ENCODE measurements at regions of chr18 and their contacts with region 1.

Region 1: DNA sequence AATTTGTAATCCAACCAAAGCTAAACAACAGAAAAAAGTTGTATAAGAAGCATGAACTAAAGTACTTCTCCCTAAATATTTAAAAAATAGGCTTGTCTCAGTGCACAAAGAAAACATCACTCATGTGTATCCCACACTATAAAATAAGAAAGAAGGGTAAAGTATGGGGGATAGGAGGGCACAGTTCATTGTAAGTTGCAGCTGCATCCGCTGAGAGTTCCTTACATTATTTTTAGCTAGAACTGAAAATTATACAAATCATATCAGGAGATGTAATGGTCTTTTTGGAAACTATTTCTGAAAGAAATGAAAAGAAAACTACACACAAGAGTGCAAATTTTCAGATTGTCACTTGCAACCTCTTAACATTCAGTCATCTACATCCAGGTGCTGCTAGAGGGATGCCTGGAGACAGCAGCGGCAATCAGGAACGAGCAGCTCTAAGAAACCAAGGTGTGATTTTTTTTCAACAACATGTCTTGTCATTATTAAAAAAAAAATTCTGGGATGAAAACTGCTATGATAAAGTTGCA is 273.6 kb downstream of the ASXL3 start:
- DNase-seq: no peak
- H3K4me3 Mint-ChIP-seq: no peak overlapping the region
- H3K27ac Mint-ChIP-seq: no peak overlapping the region
- H3K4me1 Mint-ChIP-seq: no peaks in the 10 kb centered on the region
- H3K27me3 Mint-ChIP-seq: no peaks in the 10 kb centered on the region
- CTCF ChIP-seq: no peak

Region 2: DNA sequence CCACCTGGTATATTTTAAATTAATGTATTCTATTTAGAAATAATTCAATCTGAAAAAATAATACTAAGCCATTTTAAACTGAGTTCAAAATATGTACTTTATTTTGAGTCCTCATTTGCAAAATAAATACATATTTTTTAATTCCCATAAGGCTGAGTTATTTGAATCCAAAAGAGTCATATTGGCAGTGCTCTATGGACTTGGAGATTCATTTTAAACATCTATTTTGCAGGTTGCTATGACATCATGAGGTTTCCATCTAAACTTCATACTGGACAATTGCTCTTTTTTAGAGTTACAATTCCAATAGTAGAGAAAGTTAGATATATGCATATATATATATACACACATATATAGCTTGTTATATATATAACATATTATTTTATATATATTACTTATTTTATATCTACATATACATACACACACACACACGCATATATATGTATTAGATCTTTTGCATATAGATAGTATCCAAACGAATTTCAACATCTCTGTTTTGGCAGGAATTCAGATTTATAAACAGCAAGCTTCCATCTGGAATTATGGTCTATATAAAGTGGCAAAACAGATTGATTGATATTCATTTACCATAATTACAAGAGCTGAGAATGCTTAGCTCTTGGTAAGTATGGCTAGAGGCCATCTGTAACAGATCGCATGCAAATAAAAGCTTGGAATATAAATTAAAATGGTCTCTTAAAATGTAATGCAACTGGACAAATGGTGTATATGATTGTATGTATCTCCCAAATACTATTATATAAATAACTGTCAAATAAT is 338.2 kb after region 1 on chr18:
- CTCF ChIA-PET with region 1: no interaction called
- intact Hi-C with region 1: no loop called
- DNase-seq: no peak
- H3K4me3 Mint-ChIP-seq: no peak overlapping the region
- H3K27ac Mint-ChIP-seq: no peak overlapping the region
- H3K4me1 Mint-ChIP-seq: no peaks in the 10 kb centered on the region
- H3K27me3 Mint-ChIP-seq: no peaks in the 10 kb centered on the region
- CTCF ChIP-seq: no peak

Region 3: DNA sequence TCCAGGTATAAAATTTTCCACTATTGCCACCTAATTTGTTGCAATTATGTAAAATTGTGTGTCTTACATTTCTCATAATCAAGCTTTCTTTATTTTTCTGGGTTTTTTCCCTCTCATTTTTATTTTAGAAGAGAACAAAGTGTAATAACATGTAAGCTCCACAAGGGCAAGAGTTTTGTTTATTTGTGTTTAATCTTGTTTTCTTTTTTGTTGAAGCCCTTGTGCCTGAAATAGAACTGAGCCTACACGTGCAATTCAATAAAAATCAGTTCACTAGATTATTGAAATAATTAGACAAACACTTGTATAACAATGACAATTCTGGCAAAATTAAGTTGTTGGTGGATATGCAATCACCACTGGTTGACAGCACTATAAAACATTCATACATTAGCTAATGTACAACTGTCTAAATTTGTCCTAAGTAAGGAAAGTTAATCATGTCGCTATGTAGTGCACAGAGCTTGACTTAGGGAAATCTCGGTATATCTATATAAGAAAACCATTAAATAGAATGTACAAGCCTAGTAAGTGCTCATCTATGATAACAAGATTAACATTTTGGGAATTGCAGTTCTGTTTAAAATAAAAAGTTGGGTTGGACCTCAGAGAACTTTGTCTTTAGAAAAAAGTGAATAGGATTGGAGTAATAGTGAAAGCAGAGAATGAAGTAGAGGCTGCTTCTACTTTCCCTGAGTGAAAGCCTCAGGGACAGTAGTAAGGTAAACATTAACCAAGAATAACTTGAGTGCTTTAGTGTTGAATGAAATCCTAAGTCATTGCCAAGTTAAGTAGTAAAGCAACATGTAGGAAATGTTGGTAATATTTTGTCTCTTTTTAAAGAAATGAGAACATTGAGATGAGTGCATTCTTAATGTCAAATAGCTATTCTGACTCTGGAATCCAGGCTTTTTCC is 410.5 kb after region 1 on chr18:
- CTCF ChIA-PET with region 1: no interaction called
- intact Hi-C with region 1: loop called (anchors 10 kb)
- DNase-seq: no peak
- H3K4me3 Mint-ChIP-seq: no peak overlapping the region
- H3K27ac Mint-ChIP-seq: no peak overlapping the region
- H3K4me1 Mint-ChIP-seq: peaks cover 8% of the 10 kb centered on the region
- H3K27me3 Mint-ChIP-seq: no peaks in the 10 kb centered on the region
- CTCF ChIP-seq: no peak

Measured in Calu3 (cell line).